MCF 10A (cell line): ENCODE measurements at regions of chr6 and their contacts with region 1.

Region 1: DNA sequence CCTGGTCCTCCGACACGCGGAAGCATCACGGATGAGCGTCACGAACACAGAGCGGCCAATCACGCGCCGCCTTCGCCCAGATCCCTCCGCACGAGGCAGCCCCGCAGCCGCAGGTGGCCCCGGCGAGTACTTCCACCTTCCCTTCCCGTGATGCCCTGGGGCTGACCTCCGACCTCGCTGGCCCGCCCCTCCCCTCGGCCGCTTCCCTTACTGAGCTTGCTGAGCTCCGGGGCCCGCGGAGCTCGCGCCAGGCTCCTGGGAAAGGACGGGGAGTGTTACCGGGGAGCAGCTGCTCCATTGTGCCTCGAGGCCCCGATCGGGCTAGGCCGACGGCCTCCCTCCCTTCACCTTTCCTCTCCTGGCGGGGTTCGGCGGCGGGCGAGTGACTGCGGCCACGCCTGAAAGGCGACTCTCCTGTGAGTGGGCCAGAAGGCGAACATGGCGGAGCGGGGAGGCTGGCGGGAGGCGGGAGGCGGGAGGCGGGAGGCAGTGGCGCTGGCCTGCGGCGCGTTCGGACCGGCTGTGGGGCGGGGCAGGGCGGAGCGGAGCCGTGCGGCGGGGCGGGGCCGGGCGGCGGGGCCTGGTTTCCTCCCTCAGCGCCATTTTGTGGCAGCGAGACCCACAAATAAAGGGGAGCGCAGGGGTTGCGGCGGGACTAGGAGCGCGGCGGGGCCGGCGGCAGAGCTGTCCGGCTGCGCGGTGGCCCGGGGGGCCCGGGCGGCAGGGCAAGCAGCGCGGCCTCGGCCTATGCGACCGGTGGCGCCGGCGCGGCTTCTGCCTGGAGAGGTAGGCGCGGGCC is at the start of gene WTAP:
- DNase-seq: peak; percentile 96
- H3K4me3 Mint-ChIP-seq: peak within 1 kb of the TSS; percentile 93
- H3K27ac Mint-ChIP-seq: peak within 1 kb of the TSS; percentile 98
- H3K4me1 Mint-ChIP-seq: peaks cover 17% of the 10 kb centered on the region
- H3K27me3 Mint-ChIP-seq: no peaks in the 10 kb centered on the region
- CTCF ChIP-seq: no peak
- total RNA-seq, gene WTAP: 116 and 142 TPM in 2 replicates

Region 2: GRCh38 chr6:159203304-159204005 is 523.7 kb before region 1 on chr6:
- CTCF ChIA-PET with region 1: no interaction called
- POLR2A ChIA-PET with region 1: no interaction called
- intact Hi-C with region 1: no loop called
- DNase-seq: peak; percentile 75
- H3K4me3 Mint-ChIP-seq: no peak overlapping the region
- H3K27ac Mint-ChIP-seq: no peak overlapping the region
- H3K4me1 Mint-ChIP-seq: peaks cover 6% of the 10 kb centered on the region
- H3K27me3 Mint-ChIP-seq: no peaks in the 10 kb centered on the region
- CTCF ChIP-seq: no peak

Region 3: GRCh38 chr6:159693128-159693893 is 33.8 kb before region 1 on chr6 and contains the start of gene SOD2:
- CTCF ChIA-PET with region 1: interaction called, 44 read pairs
- POLR2A ChIA-PET with region 1: interaction called, 877 read pairs
- intact Hi-C with region 1: loop called (anchors 1 kb)
- DNase-seq: peak; percentile 91
- H3K4me3 Mint-ChIP-seq: peak within 1 kb of the TSS; percentile 77
- H3K27ac Mint-ChIP-seq: peak within 1 kb of the TSS; percentile 97
- H3K4me1 Mint-ChIP-seq: peaks cover 34% of the 10 kb centered on the region
- H3K27me3 Mint-ChIP-seq: no peaks in the 10 kb centered on the region
- CTCF ChIP-seq: no peak
- total RNA-seq, gene SOD2: 424 and 600 TPM in 2 replicates

Region 4: GRCh38 chr6:159739341-159739740 is 12.2 kb after region 1 on chr6:
- CTCF ChIA-PET with region 1: interaction called, 3 read pairs
- POLR2A ChIA-PET with region 1: interaction called, 46 read pairs
- intact Hi-C with region 1: no loop called
- DNase-seq: no peak
- H3K4me3 Mint-ChIP-seq: no peak overlapping the region
- H3K27ac Mint-ChIP-seq: no peak overlapping the region
- H3K4me1 Mint-ChIP-seq: peaks cover 11% of the 10 kb centered on the region
- H3K27me3 Mint-ChIP-seq: no peaks in the 10 kb centered on the region
- CTCF ChIP-seq: no peak

Region 5: GRCh38 chr6:159777240-159777904 is 50.3 kb after region 1 on chr6:
- CTCF ChIA-PET with region 1: no interaction called
- POLR2A ChIA-PET with region 1: interaction called, 10 read pairs
- intact Hi-C with region 1: no loop called
- DNase-seq: no peak
- H3K4me3 Mint-ChIP-seq: no peak overlapping the region
- H3K27ac Mint-ChIP-seq: no peak overlapping the region
- H3K4me1 Mint-ChIP-seq: peaks cover 7% of the 10 kb centered on the region
- H3K27me3 Mint-ChIP-seq: no peaks in the 10 kb centered on the region
- CTCF ChIP-seq: no peak

Region 6: DNA sequence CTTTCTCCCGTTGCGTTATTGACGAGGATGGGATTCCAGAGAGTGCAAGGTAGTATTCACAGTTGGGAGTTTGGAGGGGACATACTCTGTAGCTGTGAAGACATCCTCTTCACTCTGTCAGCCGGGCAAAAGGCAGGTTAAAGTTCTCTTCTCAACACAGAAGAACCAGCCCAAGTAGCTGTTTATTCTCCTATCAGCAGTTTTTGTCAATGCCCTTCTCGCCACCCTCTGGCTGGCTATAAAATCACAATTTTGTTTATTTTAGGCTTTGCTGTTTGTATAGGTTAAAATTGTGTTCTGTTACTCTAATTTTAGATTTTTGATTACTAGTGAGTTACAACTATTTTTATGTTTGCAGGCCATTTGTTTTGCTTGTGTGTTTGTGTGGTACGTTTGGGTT is 125.8 kb after region 1 on chr6:
- CTCF ChIA-PET with region 1: no interaction called
- POLR2A ChIA-PET with region 1: interaction called, 6 read pairs
- intact Hi-C with region 1: loop called (anchors 5 kb)
- DNase-seq: peak; percentile 41
- H3K4me3 Mint-ChIP-seq: no peak overlapping the region
- H3K27ac Mint-ChIP-seq: no peak overlapping the region
- H3K4me1 Mint-ChIP-seq: no peaks in the 10 kb centered on the region
- H3K27me3 Mint-ChIP-seq: no peaks in the 10 kb centered on the region
- CTCF ChIP-seq: peak; percentile 28